Caco-2 (cell line): ENCODE measurements at regions of chr17 and their contacts with region 1.

Region 1: GRCh38 chr17:27939474-27940465 is 46.6 kb upstream of the LYRM9 start:
- DNase-seq: no peak
- H3K4me3 ChIP-seq: no peak overlapping the region
- H3K4me3 Mint-ChIP-seq: no peak overlapping the region
- H3K27ac Mint-ChIP-seq: no peak overlapping the region
- H3K4me1 ChIP-seq: 0 out of 2 replicates have a peak, but pooled peaks cover 7% of the 10 kb centered on the region
- H3K4me1 Mint-ChIP-seq: peaks cover 6% of the 10 kb centered on the region
- H3K27me3 ChIP-seq: no peaks in the 10 kb centered on the region
- H3K27me3 Mint-ChIP-seq: peaks cover under 1% of the 10 kb centered on the region
- CTCF ChIP-seq: no peak

Region 2: GRCh38 chr17:27907976-27908558 is 31.7 kb before region 1 on chr17:
- CTCF ChIA-PET with region 1: no interaction called
- POLR2A ChIA-PET with region 1: no interaction called
- intact Hi-C with region 1: no loop called
- DNase-seq: peak in 1 of 2 experiments; percentile 27
- H3K4me3 ChIP-seq: no peak overlapping the region
- H3K4me3 Mint-ChIP-seq: no peak overlapping the region
- H3K27ac Mint-ChIP-seq: no peak overlapping the region
- H3K4me1 ChIP-seq: 0 out of 2 replicates have a peak, but pooled peaks cover 8% of the 10 kb centered on the region
- H3K4me1 Mint-ChIP-seq: no peaks in the 10 kb centered on the region
- H3K27me3 ChIP-seq: no peaks in the 10 kb centered on the region
- H3K27me3 Mint-ChIP-seq: no peaks in the 10 kb centered on the region
- CTCF ChIP-seq: no peak

Region 3: DNA sequence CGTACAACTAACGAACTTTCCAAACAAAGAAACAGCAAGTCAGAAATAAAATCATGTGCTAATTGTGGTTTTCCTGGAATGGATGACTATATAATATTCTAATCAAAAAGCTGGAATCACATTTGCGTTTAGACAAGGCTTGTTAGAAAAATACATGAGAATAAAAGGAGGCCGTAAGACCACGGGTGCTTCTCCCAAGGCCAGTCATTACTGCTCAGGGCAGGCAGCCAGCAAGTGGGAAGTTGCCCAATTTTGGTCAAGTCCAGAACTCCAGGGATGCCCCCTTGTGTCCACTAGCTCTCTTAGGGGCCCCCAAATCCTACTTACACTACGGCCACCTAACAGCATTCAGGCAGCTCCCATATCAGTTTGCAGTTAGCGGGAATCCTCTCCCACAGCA is 20.7 kb before region 1 on chr17:
- CTCF ChIA-PET with region 1: no interaction called
- POLR2A ChIA-PET with region 1: no interaction called
- intact Hi-C with region 1: loop called (anchors 2 kb)
- DNase-seq: no peak
- H3K4me3 ChIP-seq: no peak overlapping the region
- H3K4me3 Mint-ChIP-seq: no peak overlapping the region
- H3K27ac Mint-ChIP-seq: no peak overlapping the region
- H3K4me1 ChIP-seq: no peaks in the 10 kb centered on the region
- H3K4me1 Mint-ChIP-seq: no peaks in the 10 kb centered on the region
- H3K27me3 ChIP-seq: no peaks in the 10 kb centered on the region; the same call in 1 of the 2 replicates
- H3K27me3 Mint-ChIP-seq: no peaks in the 10 kb centered on the region
- CTCF ChIP-seq: no peak

Region 4: GRCh38 chr17:28057731-28058279 is 118.0 kb after region 1 on chr17:
- CTCF ChIA-PET with region 1: no interaction called
- POLR2A ChIA-PET with region 1: no interaction called
- intact Hi-C with region 1: no loop called
- DNase-seq: peak in 1 of 2 experiments; percentile 39
- H3K4me3 ChIP-seq: no peak overlapping the region
- H3K4me3 Mint-ChIP-seq: no peak overlapping the region
- H3K27ac Mint-ChIP-seq: no peak overlapping the region
- H3K4me1 ChIP-seq: peaks cover 34% of the 10 kb centered on the region
- H3K4me1 Mint-ChIP-seq: peaks cover 55% of the 10 kb centered on the region
- H3K27me3 ChIP-seq: no peaks in the 10 kb centered on the region
- H3K27me3 Mint-ChIP-seq: no peaks in the 10 kb centered on the region
- CTCF ChIP-seq: no peak